HepG2 (cell line): ENCODE measurements at regions of chr4 and their contacts with region 1.

Region 1: DNA sequence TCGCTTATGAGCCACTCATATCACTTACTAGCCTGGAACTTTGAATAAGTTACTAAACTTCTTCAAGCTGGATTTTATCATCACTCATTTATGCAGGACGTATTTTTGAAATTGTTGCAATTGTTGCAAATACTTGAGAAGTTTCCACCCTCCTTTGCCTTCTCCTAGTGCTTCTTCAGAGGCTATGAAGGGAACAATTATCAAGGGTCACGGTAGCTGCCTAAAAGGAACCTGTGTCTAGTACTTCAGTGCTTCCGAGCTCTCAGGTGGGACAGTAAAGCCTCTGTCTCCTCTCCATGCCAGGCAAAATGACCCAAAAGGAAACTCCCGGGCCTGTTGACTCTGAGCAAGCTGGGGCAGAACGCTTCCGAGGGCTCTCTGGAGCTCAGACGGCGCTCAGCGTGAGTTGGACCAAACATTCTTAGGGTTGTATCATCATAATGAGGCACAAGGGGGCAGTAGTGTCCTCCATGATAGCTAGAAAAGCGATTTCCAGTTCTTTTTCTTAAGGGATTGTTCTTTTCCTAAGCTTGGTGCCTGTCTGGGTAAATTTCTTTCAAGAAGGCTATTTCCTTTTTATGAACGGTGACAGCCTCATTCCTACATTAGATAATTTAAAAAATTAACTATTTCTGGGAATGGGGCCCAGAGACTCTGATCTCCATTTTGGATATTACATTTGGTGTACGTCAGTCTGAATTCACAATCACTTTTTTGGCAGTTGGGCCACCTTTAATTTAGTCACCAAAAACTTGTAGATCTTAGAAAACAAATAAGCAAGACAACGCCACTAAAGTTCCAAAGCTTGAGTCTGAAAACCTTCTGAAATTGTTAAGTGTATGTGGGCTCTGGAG is 73.1 kb downstream of the PACRGL start:
- DNase-seq: peak; percentile 40
- ATAC-seq: peak; percentile 98
- H3K4me3 ChIP-seq: no peak overlapping the region
- H3K27ac ChIP-seq: no peak overlapping the region
- H3K4me1 ChIP-seq: no peaks in the 10 kb centered on the region
- H3K27me3 ChIP-seq: peaks cover 0 to 2% of the 10 kb centered on the region in 2 experiments; a peak in 1 of 5 replicates
- CTCF ChIP-seq: peak; percentile 78
- EP300 ChIP-seq: no peak
- POLR2A ChIP-seq: no peak
- RAD21 ChIP-seq: no peak

Region 2: DNA sequence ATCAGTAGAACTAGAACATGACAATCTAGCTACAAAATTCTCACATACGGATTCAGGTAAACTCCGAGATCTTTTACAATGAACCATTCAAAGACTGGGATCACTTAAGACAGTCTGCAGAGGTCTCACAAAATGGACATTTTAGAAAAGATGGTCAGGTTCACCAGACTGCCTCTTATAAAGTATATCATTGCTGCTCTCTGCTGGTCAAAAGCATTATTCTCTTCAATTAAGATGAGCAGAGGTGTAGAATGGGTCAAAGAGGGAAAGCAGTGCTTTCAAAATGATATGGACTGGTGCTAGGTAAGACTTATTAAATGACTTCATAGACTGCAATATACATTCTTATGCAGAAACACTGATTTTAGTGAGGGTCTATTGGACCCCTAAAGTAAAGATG is 361.6 kb after region 1 on chr4:
- CTCF ChIA-PET with region 1: no interaction called
- POLR2A ChIA-PET with region 1: no interaction called
- in situ Hi-C with region 1: loop called (anchors 10 kb)
- intact Hi-C with region 1: no loop called
- DNase-seq: no peak
- ATAC-seq: no peak; the same call in 2 of the 3 replicates
- H3K4me3 ChIP-seq: no peak overlapping the region
- H3K27ac ChIP-seq: no peak overlapping the region
- H3K4me1 ChIP-seq: no peaks in the 10 kb centered on the region
- H3K27me3 ChIP-seq: no peaks in the 10 kb centered on the region
- CTCF ChIP-seq: peak; percentile 21; the same call in 1 of the 2 replicates
- EP300 ChIP-seq: no peak
- POLR2A ChIP-seq: no peak
- RAD21 ChIP-seq: no peak